ENCODE measurements at regions of chr5 and their contacts with region 1.

Region 1: GRCh38 chr5:149442563-149443182 is 63.6 kb upstream of the IL17B start:
- DNase-seq: peak; percentile 54 to 87 (median 79)
- H3K4me3 ChIP-seq: no peak overlapping the region
- H3K27ac ChIP-seq: peak overlapping the region in 22 of 59 donors; percentile 11 to 78 (median 30)
- H3K27me3 ChIP-seq: no peaks in the 10 kb centered on the region
- CTCF ChIP-seq: peak; percentile 61 to 98 (median 90)

Region 2: GRCh38 chr5:149500922-149501582 is 58.4 kb after region 1 on chr5:
- intact Hi-C with region 1: loop called in 1 of 2 experiments (anchors 10 kb)
- DNase-seq: no peak
- H3K4me3 ChIP-seq: no peak overlapping the region
- H3K27ac ChIP-seq: peak overlapping the region in 1 of 59 donors; percentile 2
- H3K27me3 ChIP-seq: no peaks in the 10 kb centered on the region
- CTCF ChIP-seq: no peak

Region 3: GRCh38 chr5:149561848-149562247 is 119.2 kb after region 1 on chr5:
- intact Hi-C with region 1: loop called (anchors 2 to 5 kb)
- DNase-seq: no peak
- H3K4me3 ChIP-seq: peak overlapping the region in 1 of 59 donors; percentile 10
- H3K27ac ChIP-seq: peak overlapping the region in 30 of 59 donors; percentile 0 to 78 (median 48)
- H3K27me3 ChIP-seq: no peaks in the 10 kb centered on the region
- CTCF ChIP-seq: no peak

Region 4: DNA sequence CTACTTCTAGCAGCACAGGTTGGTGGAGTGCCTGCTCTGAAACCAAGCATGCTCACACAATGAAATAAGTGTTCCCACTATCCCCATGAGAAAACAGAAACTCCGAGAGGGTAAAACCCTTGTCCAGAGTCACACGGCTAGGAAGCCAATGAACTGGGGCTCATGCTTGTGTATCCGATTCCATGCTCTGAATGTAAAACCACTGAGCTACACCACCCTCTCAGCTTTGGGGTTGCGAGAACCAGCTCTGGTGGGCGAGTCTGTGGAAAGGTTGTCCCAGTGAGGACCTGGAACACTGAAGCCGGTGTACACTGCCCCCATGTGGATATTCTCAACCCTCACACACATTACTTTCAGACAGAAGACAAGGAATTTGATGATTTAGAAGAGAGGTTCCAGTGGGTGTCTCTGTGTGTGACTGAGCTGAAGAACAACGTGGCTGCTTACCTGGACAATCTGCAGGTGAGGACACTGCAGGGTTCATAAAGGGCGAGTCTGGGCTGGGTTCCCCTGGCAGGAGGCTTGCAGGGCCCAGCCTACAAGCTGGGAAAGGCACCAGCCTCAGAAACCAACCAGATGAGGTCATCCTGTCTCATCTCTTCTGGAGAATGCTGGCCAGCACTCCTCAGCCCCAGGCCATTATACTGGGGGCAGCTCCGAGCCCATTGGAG is 176.0 kb after region 1 on chr5:
- intact Hi-C with region 1: loop called in 1 of 2 experiments (anchors 2 kb)
- DNase-seq: peak in 7 of 10 donors; percentile 24 to 77 (median 58)
- H3K4me3 ChIP-seq: no peak overlapping the region
- H3K27ac ChIP-seq: peak overlapping the region in 40 of 59 donors; percentile 0 to 78 (median 54)
- H3K27me3 ChIP-seq: no peaks in the 10 kb centered on the region
- CTCF ChIP-seq: peak in 55 of 56 donors; percentile 19 to 81 (median 70)